Mammary epithelial cell (primary cell): ENCODE measurements at regions of chr5 and their contacts with region 1.

Region 1: DNA sequence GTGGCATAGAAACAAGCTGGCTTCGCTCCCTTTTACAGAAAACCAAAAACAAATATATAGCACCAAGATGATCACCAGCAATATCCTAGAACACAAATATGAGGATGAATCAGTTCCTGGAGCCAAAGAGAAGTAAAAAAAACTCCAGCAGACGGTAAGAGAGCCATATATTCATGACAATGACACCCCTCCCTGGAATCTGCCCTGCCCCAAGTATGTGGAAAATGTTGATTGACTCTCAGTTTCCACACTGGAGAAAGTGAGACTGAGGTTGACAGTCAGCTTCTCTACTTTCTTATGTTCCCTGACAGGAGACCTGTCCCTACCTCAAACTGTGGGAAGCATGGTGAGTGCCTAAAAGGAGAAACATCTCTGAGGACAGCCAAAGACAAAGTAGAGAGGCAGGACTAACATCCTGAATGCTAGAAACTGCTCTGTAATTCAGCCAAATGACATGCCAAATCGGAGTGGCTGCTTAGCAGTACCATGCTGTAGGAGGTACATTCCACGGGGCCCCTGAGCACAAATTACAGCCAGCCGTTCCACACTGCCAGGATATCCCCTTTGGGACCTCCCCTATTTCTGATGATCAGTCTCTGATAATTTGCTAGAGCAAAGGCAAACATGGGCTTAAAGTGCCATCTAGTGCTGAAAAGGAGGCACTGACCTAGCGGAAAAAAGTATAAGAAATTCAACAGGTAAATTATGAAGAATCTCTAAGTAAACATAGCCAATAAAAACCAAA is 424.0 kb upstream of the RGMB start:
- DNase-seq: peak; percentile 66
- H3K4me3 ChIP-seq: no peak overlapping the region
- H3K27ac ChIP-seq: peak overlapping the region; percentile 9
- H3K4me1 ChIP-seq: no peaks in the 10 kb centered on the region
- H3K27me3 ChIP-seq: no peaks in the 10 kb centered on the region
- CTCF ChIP-seq: peak; percentile 56 to 64

Region 2: GRCh38 chr5:97297063-97297703 is 1052.2 kb before region 1 on chr5:
- CTCF ChIA-PET with region 1: no interaction called
- dilution Hi-C with region 1: no loop called
- in situ Hi-C with region 1: no loop called
- intact Hi-C with region 1: loop called (anchors 2 kb)
- DNase-seq: peak; percentile 6
- H3K4me3 ChIP-seq: no peak overlapping the region
- H3K27ac ChIP-seq: no peak overlapping the region
- H3K4me1 ChIP-seq: no peaks in the 10 kb centered on the region
- H3K27me3 ChIP-seq: no peaks in the 10 kb centered on the region
- CTCF ChIP-seq: peak; percentile 27 to 45

Region 3: GRCh38 chr5:97877588-97877987 is 471.8 kb before region 1 on chr5:
- CTCF ChIA-PET with region 1: no interaction called
- dilution Hi-C with region 1: no loop called
- in situ Hi-C with region 1: no loop called
- intact Hi-C with region 1: loop called (anchors 1 kb)
- DNase-seq: no peak
- H3K4me3 ChIP-seq: no peak overlapping the region
- H3K27ac ChIP-seq: no peak overlapping the region
- H3K4me1 ChIP-seq: no peaks in the 10 kb centered on the region
- H3K27me3 ChIP-seq: no peaks in the 10 kb centered on the region
- CTCF ChIP-seq: peak in 1 of 2 donors; percentile 24

Region 4: DNA sequence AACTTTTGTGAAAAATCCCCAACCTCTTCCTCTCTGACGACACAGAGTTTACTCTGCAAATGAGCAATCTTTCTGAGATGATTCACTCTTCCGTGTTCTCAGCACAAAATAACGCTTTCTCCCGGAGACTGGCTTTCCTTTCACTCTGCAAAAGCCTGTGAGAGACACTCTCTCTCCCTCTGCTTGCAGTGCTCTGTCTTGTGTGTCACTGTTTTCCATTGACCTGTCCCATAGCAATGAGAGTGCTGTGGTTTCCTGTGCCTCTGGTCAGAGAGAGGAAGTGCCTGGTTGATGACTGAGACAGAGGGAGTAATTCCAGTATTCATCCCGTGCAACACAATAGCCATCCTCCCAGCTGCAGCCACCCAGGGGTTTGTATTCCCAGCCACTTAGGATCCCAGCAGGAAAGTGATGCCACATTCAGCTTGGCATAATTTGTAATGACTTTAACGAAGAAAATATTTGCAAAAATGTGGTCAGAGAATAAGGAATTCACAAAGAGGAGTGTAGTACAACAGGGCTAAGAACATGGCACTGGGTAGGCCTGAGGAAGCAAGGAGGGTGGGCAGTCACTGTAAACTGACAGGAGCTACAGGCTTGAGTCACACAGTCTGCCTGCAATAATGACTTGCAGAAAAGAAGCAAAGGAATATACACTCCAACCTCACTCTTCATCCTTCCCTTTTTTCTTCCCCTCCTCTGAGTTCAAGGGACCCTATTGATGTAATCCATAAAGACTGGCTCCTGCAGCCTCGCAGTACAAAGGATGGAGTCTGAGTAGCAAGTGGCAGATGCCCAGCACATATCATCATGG is 39.4 kb before region 1 on chr5:
- CTCF ChIA-PET with region 1: no interaction called
- dilution Hi-C with region 1: no loop called
- in situ Hi-C with region 1: no loop called
- intact Hi-C with region 1: loop called (anchors 2 kb)
- DNase-seq: peak; percentile 99
- H3K4me3 ChIP-seq: peak overlapping the region in 2 of 3 experiments; percentile 17 to 24
- H3K27ac ChIP-seq: peak overlapping the region; percentile 96
- H3K4me1 ChIP-seq: peaks cover 52% of the 10 kb centered on the region
- H3K27me3 ChIP-seq: no peaks in the 10 kb centered on the region
- CTCF ChIP-seq: no peak

Region 5: GRCh38 chr5:98827161-98827560 is 477.7 kb after region 1 on chr5:
- CTCF ChIA-PET with region 1: no interaction called
- dilution Hi-C with region 1: no loop called
- in situ Hi-C with region 1: no loop called
- intact Hi-C with region 1: loop called (anchors 10 kb)
- DNase-seq: peak; percentile 20
- H3K4me3 ChIP-seq: no peak overlapping the region
- H3K27ac ChIP-seq: no peak overlapping the region
- H3K4me1 ChIP-seq: no peaks in the 10 kb centered on the region
- H3K27me3 ChIP-seq: no peaks in the 10 kb centered on the region
- CTCF ChIP-seq: peak; percentile 38 to 52